Ascending aorta (tissue), 2 donors: ENCODE measurements at regions of chr10 and their contacts with region 1.

Region 1: GRCh38 chr10:115936926-115937767 is 335.9 kb downstream of the GFRA1 start:
- DNase-seq: no peak
- H3K4me3 ChIP-seq: no peak overlapping the region
- H3K27ac ChIP-seq: no peak overlapping the region
- H3K4me1 ChIP-seq: peaks cover 0 to 2% of the 10 kb centered on the region in 2 donors
- H3K27me3 ChIP-seq: no peaks in the 10 kb centered on the region
- CTCF ChIP-seq: no peak

Region 2: DNA sequence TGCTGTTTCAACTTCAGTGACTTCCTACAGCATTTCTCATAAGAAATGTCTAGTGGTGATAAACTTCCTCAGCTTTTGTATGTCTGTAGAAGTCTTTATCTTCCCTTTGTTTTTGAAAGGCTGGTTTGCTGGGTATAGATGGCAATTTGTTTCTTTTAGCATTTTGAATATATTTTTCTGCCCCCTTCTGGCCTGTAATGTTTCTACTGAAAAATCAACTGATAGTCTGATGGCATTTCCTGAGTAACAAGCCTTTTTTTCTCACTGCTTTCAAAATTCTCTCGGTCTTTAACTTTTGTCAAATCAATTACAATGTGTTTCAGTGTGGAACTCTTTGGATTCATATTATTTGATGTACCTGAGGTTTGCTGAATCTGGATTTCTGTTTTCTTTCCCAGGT is 356.9 kb before region 1 on chr10:
- intact Hi-C with region 1: no loop called
- DNase-seq: no peak
- H3K4me3 ChIP-seq: no peak overlapping the region
- H3K27ac ChIP-seq: no peak overlapping the region
- H3K4me1 ChIP-seq: no peaks in the 10 kb centered on the region
- H3K27me3 ChIP-seq: no peaks in the 10 kb centered on the region
- CTCF ChIP-seq: no peak

Region 3: DNA sequence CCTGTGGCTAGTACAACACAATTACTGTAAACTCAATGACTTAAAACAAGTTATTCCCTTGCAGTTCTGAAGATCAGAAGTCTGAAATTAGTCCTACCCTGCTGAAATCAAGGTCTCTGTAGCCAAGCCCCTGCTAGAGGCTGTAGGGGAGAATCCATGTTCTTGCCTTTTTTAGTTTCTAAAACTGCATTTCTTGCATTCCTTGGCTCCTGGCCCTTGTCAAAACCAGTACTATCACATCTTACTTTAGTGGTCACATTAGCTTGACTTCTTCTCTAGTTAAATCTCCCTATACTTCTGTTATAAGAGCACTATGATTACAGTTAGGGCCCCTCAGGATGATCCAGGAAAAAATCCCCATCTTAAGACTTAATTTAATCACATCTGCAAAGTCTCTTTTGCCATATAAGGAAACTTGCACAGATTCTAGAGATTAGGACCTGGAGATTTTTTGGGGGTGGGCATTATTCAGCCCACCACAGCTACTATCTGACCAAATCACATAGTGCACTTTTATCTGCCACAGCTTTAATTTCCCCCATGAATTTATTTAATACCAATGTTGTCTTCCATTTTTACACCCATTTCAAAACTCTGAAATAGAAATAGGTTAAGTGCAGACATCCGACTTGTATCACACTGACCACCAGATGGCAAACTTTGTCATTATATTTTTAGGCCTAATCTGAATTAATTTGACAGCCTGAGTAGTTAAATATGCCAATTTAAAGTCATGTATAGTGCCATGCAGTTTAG is 230.9 kb before region 1 on chr10:
- intact Hi-C with region 1: loop called (anchors 10 kb)
- DNase-seq: no peak
- H3K4me3 ChIP-seq: no peak overlapping the region
- H3K27ac ChIP-seq: no peak overlapping the region
- H3K4me1 ChIP-seq: no peaks in the 10 kb centered on the region
- H3K27me3 ChIP-seq: no peaks in the 10 kb centered on the region
- CTCF ChIP-seq: peak; percentile 29 to 62 (median 44)

Region 4: DNA sequence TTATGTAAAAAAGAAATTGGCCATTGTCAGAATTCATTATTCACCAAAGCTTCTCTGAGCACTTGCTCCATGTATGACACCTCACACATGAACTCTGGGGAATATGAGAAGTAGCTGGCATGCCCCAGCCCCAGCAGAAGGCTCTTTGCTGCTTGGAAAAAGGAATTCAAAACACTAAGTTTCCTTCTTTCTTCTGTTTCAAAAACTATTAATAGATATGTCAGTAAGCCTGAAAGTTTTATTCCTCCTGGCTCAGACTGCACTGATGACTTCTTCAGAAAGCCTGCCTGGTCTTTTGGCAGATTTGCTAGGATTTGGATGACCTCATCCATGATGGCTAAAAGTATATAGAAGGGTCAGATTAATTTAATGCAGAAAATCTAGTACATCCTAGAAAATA is 175.1 kb before region 1 on chr10:
- intact Hi-C with region 1: no loop called
- DNase-seq: peak in 1 of 2 donors; percentile 65
- H3K4me3 ChIP-seq: no peak overlapping the region
- H3K27ac ChIP-seq: peak overlapping the region; percentile 44 to 68
- H3K4me1 ChIP-seq: peaks cover 0 to 6% of the 10 kb centered on the region in 2 donors
- H3K27me3 ChIP-seq: no peaks in the 10 kb centered on the region
- CTCF ChIP-seq: no peak